ENCODE measurements at regions of chr7 and their contacts with region 1.

Region 1: GRCh38 chr7:29189743-29190201 is 4.8 kb upstream of the CHN2 start:
- DNase-seq: peak; percentile 87
- H3K4me3 ChIP-seq: no peak overlapping the region; a peak in 2 of 4 replicates
- H3K27ac ChIP-seq: no peak overlapping the region
- H3K4me1 ChIP-seq: peaks cover 0 to 6% of the 10 kb centered on the region in 2 experiments; a peak in 1 of 4 replicates
- H3K27me3 ChIP-seq: peaks cover 19% of the 10 kb centered on the region
- CTCF ChIP-seq: peak; percentile 91
- EP300 ChIP-seq: no peak
- RAD21 ChIP-seq: peak; percentile 87

Region 2: GRCh38 chr7:29099891-29100847 is 89.6 kb before region 1 on chr7:
- CTCF ChIA-PET with region 1: interaction called, 12 read pairs
- POLR2A ChIA-PET with region 1: no interaction called
- DNase-seq: no peak
- H3K4me3 ChIP-seq: no peak overlapping the region
- H3K27ac ChIP-seq: peak overlapping the region in 1 of 2 experiments; percentile 31; a peak in 1 of 4 replicates
- H3K4me1 ChIP-seq: peaks cover 0 to 17% of the 10 kb centered on the region in 2 experiments; a peak in 1 of 4 replicates
- H3K27me3 ChIP-seq: no peaks in the 10 kb centered on the region
- CTCF ChIP-seq: no peak
- EP300 ChIP-seq: no peak
- RAD21 ChIP-seq: no peak

Region 3: GRCh38 chr7:29156907-29157452 is 32.8 kb before region 1 on chr7:
- CTCF ChIA-PET with region 1: interaction called, 59 read pairs
- POLR2A ChIA-PET with region 1: no interaction called
- DNase-seq: peak; percentile 39
- H3K4me3 ChIP-seq: no peak overlapping the region
- H3K27ac ChIP-seq: no peak overlapping the region
- H3K4me1 ChIP-seq: peaks cover 0 to 26% of the 10 kb centered on the region in 2 experiments; a peak in 2 of 4 replicates
- H3K27me3 ChIP-seq: no peaks in the 10 kb centered on the region
- CTCF ChIP-seq: no peak
- EP300 ChIP-seq: no peak
- RAD21 ChIP-seq: no peak

Region 4: GRCh38 chr7:29248713-29249382 is 59.1 kb after region 1 on chr7:
- CTCF ChIA-PET with region 1: interaction called, 16 read pairs
- POLR2A ChIA-PET with region 1: no interaction called
- DNase-seq: no peak
- H3K4me3 ChIP-seq: no peak overlapping the region
- H3K27ac ChIP-seq: no peak overlapping the region
- H3K4me1 ChIP-seq: peaks cover 0 to 12% of the 10 kb centered on the region in 2 experiments; a peak in 2 of 4 replicates
- H3K27me3 ChIP-seq: no peaks in the 10 kb centered on the region
- CTCF ChIP-seq: no peak
- EP300 ChIP-seq: no peak
- RAD21 ChIP-seq: no peak

Region 5: DNA sequence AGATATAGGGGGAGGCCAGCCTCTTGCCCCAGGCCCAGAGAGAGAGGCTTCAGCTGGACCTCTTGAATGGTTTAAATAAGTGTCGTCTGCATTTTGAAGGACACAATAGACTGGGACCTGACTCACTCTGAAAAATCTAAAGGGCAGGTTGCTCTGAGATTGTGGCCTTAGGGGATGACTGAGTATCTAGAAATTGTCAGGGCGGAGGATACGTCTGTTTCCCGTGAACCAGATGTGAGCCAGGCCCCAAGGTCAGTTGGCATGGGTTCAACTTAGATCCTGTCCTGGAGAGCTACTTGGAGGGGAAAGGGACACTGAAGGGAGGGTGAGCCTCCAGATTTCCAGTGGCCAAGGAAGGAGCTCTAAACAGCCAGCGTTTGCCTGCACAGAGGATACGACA is 115.0 kb after region 1 on chr7:
- CTCF ChIA-PET with region 1: interaction called, 26 read pairs
- POLR2A ChIA-PET with region 1: no interaction called
- DNase-seq: peak; percentile 83
- H3K4me3 ChIP-seq: no peak overlapping the region
- H3K27ac ChIP-seq: peak overlapping the region in 1 of 2 experiments; percentile 64; a peak in 2 of 4 replicates
- H3K4me1 ChIP-seq: peaks cover 0 to 18% of the 10 kb centered on the region in 2 experiments; a peak in 2 of 4 replicates
- H3K27me3 ChIP-seq: no peaks in the 10 kb centered on the region; the same call in 1 of the 2 replicates
- CTCF ChIP-seq: no peak
- EP300 ChIP-seq: peak in 1 of 2 experiments; percentile 81; a peak in 1 of 4 replicates
- RAD21 ChIP-seq: no peak

Region 6: GRCh38 chr7:29345600-29345999 is 155.8 kb after region 1 on chr7:
- CTCF ChIA-PET with region 1: interaction called, 185 read pairs
- POLR2A ChIA-PET with region 1: no interaction called
- DNase-seq: peak; percentile 63
- H3K4me3 ChIP-seq: no peak overlapping the region
- H3K27ac ChIP-seq: no peak overlapping the region
- H3K4me1 ChIP-seq: peaks cover 4% of the 10 kb centered on the region in 2 experiments; a peak in 1 of 4 replicates
- H3K27me3 ChIP-seq: no peaks in the 10 kb centered on the region
- CTCF ChIP-seq: peak; percentile 37
- EP300 ChIP-seq: no peak
- RAD21 ChIP-seq: peak; percentile 93

Region 7: GRCh38 chr7:29408841-29409243 is 219.1 kb after region 1 on chr7:
- CTCF ChIA-PET with region 1: interaction called, 236 read pairs
- POLR2A ChIA-PET with region 1: no interaction called
- DNase-seq: peak; percentile 76
- H3K4me3 ChIP-seq: no peak overlapping the region
- H3K27ac ChIP-seq: no peak overlapping the region
- H3K4me1 ChIP-seq: no peaks in the 10 kb centered on the region; a peak in 1 of 4 replicates
- H3K27me3 ChIP-seq: 0 out of 2 replicates have a peak, but pooled peaks cover 4% of the 10 kb centered on the region
- CTCF ChIP-seq: peak; percentile 97
- EP300 ChIP-seq: no peak
- RAD21 ChIP-seq: peak; percentile 99